Caco-2 (cell line): ENCODE measurements at regions of chr5 and their contacts with region 1.

Region 1: DNA sequence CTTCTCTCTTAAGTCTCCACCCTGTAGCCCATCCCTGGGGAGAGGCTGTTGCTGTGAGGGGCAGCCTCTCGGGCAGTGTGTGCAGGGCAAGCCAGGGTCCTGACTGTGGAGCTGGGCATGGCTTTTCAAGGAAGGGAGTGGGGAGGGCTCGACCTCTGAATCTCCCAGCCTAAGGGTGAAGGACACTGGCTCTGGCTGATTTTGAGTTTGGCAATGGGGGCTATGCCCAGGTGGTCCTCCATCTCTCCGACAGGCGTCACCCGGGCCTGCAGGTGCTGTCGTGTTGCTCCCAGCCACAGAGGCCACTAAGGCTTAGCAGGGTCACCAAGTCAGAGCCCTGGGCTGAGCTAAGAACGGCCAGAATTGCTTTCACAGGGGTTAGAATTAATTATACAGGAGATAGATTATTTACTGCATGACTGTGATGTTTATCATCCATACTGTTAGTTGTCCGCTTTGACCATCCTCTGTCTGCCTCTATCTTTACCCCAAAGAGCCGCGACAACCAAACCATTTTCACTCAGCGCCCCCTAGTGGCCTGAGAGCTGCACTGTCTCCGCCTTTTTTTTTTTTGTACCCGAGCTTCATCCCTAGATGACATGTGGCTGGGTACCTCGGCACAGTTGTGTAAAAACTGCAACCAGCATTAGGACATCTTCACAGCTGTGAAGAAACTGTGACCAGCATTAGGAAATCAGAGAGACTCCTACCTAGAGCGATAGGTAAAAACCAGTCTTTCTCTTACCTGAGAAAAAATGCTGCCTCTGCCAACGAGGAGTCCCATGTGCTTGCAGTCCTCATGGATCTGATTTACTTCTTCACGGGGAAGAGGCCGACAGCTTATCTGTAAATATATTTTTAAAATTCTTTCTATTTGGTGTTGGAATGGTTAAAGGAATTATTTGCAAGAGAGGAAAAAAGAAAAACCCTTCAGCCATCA is 44.5 kb downstream of the AGXT2 start:
- DNase-seq: peak; percentile 43 to 78
- H3K4me3 ChIP-seq: no peak overlapping the region
- H3K4me3 Mint-ChIP-seq: no peak overlapping the region
- H3K27ac Mint-ChIP-seq: no peak overlapping the region
- H3K4me1 ChIP-seq: no peaks in the 10 kb centered on the region
- H3K4me1 Mint-ChIP-seq: no peaks in the 10 kb centered on the region
- H3K27me3 ChIP-seq: no peaks in the 10 kb centered on the region
- H3K27me3 Mint-ChIP-seq: peaks cover 2% of the 10 kb centered on the region
- CTCF ChIP-seq: peak; percentile 90 to 95

Region 2: GRCh38 chr5:34898258-34898895 is 104.9 kb before region 1 on chr5:
- CTCF ChIA-PET with region 1: no interaction called
- POLR2A ChIA-PET with region 1: no interaction called
- intact Hi-C with region 1: no loop called
- DNase-seq: peak; percentile 68 to 75
- H3K4me3 ChIP-seq: no peak overlapping the region
- H3K4me3 Mint-ChIP-seq: no peak overlapping the region
- H3K27ac Mint-ChIP-seq: peak overlapping the region; percentile 45
- H3K4me1 ChIP-seq: peaks cover 15% of the 10 kb centered on the region; the same call in 1 of the 2 replicates
- H3K4me1 Mint-ChIP-seq: no peaks in the 10 kb centered on the region
- H3K27me3 ChIP-seq: no peaks in the 10 kb centered on the region
- H3K27me3 Mint-ChIP-seq: no peaks in the 10 kb centered on the region
- CTCF ChIP-seq: peak; percentile 85 to 93

Region 3: GRCh38 chr5:34929150-34929719 is 74.1 kb before region 1 on chr5 and contains the start of gene DNAJC21:
- CTCF ChIA-PET with region 1: interaction called, 6 read pairs
- POLR2A ChIA-PET with region 1: interaction called, 6 read pairs
- intact Hi-C with region 1: loop called (anchors 2 kb)
- DNase-seq: peak; percentile 98
- H3K4me3 ChIP-seq: peak within 1 kb of the TSS; percentile 99
- H3K4me3 Mint-ChIP-seq: peak within 1 kb of the TSS; percentile 70
- H3K27ac Mint-ChIP-seq: peak within 1 kb of the TSS; percentile 23
- H3K4me1 ChIP-seq: peaks cover 17% of the 10 kb centered on the region; the same call in 1 of the 2 replicates
- H3K4me1 Mint-ChIP-seq: peaks cover 15% of the 10 kb centered on the region
- H3K27me3 ChIP-seq: no peaks in the 10 kb centered on the region
- H3K27me3 Mint-ChIP-seq: no peaks in the 10 kb centered on the region
- CTCF ChIP-seq: no peak
- total RNA-seq, gene DNAJC21: 62.3 and 66.0 TPM in 2 replicates

Region 4: GRCh38 chr5:34957857-34958690 is 45.2 kb before region 1 on chr5:
- CTCF ChIA-PET with region 1: interaction called, 38 read pairs
- POLR2A ChIA-PET with region 1: no interaction called
- intact Hi-C with region 1: loop called (anchors 1 kb)
- DNase-seq: peak in 1 of 2 experiments; percentile 45
- H3K4me3 ChIP-seq: no peak overlapping the region
- H3K4me3 Mint-ChIP-seq: no peak overlapping the region
- H3K27ac Mint-ChIP-seq: no peak overlapping the region
- H3K4me1 ChIP-seq: 0 out of 2 replicates have a peak, but pooled peaks cover 2% of the 10 kb centered on the region
- H3K4me1 Mint-ChIP-seq: no peaks in the 10 kb centered on the region
- H3K27me3 ChIP-seq: no peaks in the 10 kb centered on the region
- H3K27me3 Mint-ChIP-seq: no peaks in the 10 kb centered on the region
- CTCF ChIP-seq: peak; percentile 66 to 77